ENCODE measurements at regions of chr12 and their contacts with region 1.

Region 1: DNA sequence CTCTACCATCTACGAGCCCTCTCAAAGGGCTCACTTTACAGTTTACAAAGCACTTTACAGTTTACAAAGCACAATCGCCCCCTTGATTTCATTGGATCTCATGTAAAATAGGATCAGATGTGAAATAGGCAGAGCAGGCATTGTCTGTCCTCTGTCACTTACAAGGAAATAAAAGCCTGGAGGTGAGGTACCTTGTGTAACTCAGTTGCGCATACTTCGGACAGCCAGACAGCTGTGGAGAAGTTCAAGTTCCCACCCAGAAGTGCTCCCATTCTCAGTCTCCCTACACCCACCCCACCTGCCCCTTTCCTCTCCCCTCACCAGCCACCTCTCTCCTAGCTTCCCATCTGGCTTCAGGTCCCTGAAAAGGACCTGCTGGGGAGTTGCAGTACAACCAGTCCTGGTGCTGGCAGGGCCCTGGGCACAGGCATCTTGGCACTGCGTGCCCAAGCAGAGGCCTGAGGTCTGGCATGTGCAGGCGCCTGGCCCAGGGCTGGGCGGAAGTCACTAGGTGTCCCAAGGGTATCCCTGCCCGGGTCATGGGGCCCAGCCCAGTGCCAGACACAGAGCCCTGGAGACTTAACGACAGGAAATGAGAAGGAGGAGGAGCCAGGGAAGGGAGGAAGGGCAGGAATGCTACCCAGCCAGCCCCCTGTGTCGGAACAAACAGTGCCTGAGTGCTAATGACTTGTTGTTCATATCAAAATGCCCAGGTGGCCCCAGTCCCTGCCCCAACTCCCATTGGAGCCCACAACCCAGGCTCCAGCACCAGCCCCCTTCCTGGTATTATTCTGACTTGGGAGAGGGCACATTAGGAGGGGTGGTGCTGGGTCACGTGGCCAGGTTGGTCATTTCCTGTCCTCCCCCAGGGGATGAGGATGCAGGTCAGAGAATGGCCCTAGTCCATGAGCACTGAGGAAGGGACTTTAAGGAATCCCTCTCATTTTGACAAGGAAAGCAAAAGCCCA is 5.4 kb downstream of the RAPGEF3 start:
- DNase-seq: peak; percentile 80 to 97
- H3K4me3 ChIP-seq: peak overlapping the region; percentile 12 to 27
- H3K27ac ChIP-seq: peak overlapping the region; percentile 87 to 94
- H3K4me1 ChIP-seq: peaks cover 29 to 57% of the 10 kb centered on the region in 2 donors
- H3K27me3 ChIP-seq: no peaks in the 10 kb centered on the region
- CTCF ChIP-seq: peak in 2 of 3 experiments; percentile 12 to 21

Region 2: DNA sequence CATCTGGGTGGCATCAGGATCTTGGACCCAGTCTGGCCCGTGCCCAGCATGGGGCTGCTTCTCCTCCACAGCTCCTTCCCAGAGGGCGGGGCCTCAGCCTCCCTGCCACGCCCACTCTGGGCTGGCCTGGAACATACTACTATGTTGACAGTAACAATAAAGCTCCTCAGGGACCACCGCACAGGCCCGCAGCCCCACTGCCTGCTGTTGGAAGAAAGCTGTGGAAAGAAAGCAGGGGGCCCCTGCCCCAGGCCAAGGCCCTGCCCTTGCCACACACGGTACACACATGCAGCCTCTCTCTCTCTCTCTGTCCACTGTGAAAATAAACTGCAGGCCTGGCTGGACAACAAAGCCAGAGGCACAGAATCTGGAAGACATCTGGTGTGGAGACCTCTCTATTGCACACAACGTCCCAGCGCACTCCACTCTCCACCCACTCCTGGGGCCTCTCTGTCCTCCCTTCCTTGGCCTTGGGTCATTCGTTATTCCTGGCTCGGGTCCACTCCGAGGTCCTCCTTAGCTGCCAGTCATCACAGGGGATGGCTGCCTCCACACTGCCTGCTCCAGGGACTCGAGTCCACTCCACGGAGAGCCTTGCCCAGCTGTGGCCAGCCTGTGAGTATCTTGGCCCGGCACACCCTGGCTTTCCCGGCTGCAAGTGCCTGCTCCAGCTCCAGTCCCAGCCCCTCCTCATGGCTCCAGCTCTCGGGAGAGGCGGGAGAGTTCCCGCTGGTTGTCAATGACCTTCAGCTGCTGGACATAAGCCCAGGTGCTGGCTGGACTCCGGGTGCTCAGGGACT is 16.2 kb before region 1 on chr12:
- intact Hi-C with region 1: loop called (anchors 1 kb)
- DNase-seq: peak; percentile 77 to 95
- H3K4me3 ChIP-seq: peak overlapping the region in 1 of 2 donors; percentile 9
- H3K27ac ChIP-seq: peak overlapping the region; percentile 80 to 86
- H3K4me1 ChIP-seq: peaks cover 18 to 45% of the 10 kb centered on the region in 2 donors
- H3K27me3 ChIP-seq: no peaks in the 10 kb centered on the region
- CTCF ChIP-seq: no peak

Region 3: GRCh38 chr12:47773062-47773857 is 19.9 kb after region 1 on chr12 and contains the start of gene SLC48A1:
- intact Hi-C with region 1: loop called (anchors 1 kb)
- DNase-seq: peak in 1 of 2 donors; percentile 81
- H3K4me3 ChIP-seq: peak within 1 kb of the TSS; percentile 93 to 98
- H3K27ac ChIP-seq: peak within 1 kb of the TSS; percentile 76 to 89
- H3K4me1 ChIP-seq: peaks cover 34 to 47% of the 10 kb centered on the region in 2 donors
- H3K27me3 ChIP-seq: no peaks in the 10 kb centered on the region
- CTCF ChIP-seq: peak in 2 of 3 experiments; percentile 32 to 42
- total RNA-seq, gene SLC48A1: 144 TPM

Region 4: DNA sequence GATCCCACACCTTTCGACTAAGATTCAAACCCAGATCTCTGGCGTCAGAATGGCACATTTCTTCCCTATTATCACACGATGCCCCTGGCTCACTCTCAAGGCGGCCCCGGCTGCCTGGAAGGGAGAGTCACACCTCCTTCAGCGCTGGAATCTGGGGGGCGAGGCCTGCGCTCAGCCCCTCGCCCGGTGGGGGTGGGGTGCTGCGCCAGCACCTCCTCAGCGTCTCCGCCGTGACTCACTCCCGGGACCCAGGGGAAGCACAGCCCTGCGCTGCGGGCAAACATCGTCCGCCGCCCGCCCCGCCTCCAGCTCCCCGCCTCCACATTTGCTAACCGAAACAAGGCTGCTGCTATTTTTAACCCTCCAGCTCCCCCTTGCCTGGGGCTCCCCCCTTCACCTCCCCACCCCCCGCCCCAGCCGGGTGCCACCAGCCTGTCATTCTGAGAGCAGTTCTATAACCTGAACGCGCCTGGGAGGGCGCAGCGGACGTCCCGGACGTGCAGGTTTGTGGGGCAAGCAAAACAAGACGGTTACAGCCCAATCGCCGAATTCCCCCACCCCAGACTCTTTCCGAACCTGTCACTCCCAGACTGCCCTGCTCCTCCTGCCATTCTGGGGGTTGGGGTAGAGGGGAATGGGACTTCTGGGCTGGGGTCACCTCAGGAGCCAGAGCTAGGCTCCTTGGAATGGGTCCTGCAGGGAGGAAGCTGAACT is 59.6 kb after region 1 on chr12:
- intact Hi-C with region 1: loop called (anchors 2 kb)
- DNase-seq: peak; percentile 86 to 98
- H3K4me3 ChIP-seq: peak overlapping the region; percentile 28 to 61
- H3K27ac ChIP-seq: peak overlapping the region; percentile 97
- H3K4me1 ChIP-seq: peaks cover 56 to 87% of the 10 kb centered on the region in 2 donors
- H3K27me3 ChIP-seq: no peaks in the 10 kb centered on the region
- CTCF ChIP-seq: peak in 1 of 3 experiments; percentile 6

Measured in ascending aorta (tissue), 2 donors.